Activated naive CD4-positive, alpha-beta T cell treated with anti-CD3 and anti-CD28 coated beads for 36 hours (primary cell): ENCODE measurements at regions of chr3 and their contacts with region 1.

Region 1: DNA sequence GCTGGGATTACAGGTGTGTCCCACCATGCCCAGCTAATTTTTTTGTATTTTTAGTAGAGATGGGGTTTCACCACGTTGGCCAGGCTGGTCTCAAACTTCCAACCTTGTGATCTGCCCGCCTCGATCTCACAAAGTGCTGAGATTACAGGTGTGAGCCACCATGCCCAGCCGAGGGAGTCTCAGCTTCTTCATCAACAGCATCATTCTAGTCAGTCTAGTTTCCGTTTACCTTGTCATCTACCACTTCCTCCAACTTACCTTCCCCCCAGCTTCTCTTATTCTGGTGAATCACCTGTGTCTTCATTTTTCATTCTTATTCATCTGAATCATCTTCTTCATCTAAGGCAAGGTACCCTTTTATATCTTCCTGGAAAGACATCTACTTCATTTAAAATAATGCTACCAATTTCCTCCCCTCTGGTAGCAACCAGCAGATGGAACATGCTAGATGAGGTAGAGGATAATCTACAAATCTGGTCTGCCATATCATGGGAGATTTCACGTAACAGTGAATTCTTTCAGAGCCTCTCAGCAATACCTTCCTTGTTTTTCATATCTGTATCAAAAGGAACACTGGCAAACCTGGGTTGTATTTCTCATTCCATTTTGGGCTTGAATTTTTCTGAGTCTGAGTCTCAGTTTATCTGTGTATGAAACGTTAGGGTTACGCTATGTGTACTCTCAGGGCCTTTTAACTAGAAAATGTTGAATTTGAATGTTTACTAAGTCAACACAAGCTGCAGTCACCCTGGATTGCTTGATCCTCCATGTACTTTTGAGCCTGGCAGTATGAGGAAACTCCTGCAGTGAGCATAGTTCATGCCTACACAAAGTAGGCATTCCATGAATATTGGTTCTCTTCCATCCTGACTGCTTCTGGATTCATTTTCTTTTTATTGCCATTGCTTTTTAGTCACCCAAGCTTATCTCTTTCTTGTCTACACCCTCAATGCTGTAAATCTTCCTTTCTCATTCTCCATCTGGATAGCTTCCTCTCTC is 16.8 kb downstream of the LPP start:
- DNase-seq: peak; percentile 89
- H3K4me3 Mint-ChIP-seq: peak overlapping the region; percentile 39
- H3K27ac Mint-ChIP-seq: peak overlapping the region; percentile 86
- H3K4me1 Mint-ChIP-seq: peaks cover 64% of the 10 kb centered on the region
- H3K27me3 Mint-ChIP-seq: no peaks in the 10 kb centered on the region

Region 2: GRCh38 chr3:187802928-187803259 is 367.9 kb before region 1 on chr3:
- CTCF ChIA-PET with region 1: no interaction called
- intact Hi-C with region 1: loop called (anchors 1 kb)
- DNase-seq: peak; percentile 89
- H3K4me3 Mint-ChIP-seq: peak overlapping the region; percentile 1
- H3K27ac Mint-ChIP-seq: peak overlapping the region; percentile 79
- H3K4me1 Mint-ChIP-seq: peaks cover 95% of the 10 kb centered on the region
- H3K27me3 Mint-ChIP-seq: no peaks in the 10 kb centered on the region

Region 3: DNA sequence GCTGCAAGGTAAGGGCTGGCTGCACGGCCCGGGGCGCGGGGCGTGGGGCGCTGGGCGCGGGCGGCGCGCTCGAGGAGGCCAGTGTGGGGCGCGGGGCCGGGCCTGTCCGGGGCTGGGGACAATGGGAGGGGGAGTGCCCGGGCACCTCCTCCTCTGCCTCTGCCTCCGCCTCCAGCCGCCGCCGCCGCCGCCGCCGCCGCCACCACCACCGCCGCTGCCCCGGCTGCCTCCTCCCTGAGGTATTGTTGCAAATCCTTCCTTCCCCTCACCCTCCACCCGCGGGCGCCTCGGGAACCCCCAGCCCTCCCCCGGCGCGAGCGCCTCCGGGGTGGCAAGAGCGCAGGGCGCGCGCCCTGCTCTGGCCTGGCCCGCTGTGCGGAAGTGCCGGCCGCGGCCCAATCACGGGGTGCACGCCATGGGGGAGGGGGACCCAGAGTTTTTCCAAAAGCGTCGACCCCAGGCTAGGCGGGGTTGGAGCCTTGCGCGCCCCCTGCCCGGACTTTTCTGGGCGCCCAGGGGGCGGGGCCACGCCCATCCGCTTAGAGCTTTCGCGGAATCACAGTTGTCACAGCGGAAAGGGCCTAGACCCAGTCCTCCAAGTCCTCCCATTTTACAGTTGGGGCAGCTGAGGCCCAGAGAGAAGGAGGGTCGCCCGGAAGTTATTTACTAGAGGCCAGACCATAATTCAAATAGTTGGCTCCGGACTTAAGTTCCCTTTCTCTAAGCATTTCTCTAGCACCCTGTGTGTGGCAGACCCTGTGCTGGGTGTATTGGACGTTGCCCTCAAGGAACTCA is 16.5 kb before region 1 on chr3 and contains the start of gene LPP:
- CTCF ChIA-PET with region 1: interaction called, 3 read pairs
- intact Hi-C with region 1: loop called (anchors 1 kb)
- DNase-seq: peak; percentile 88
- H3K4me3 Mint-ChIP-seq: peak within 1 kb of the TSS; percentile 83
- H3K27ac Mint-ChIP-seq: peak within 1 kb of the TSS; percentile 89
- H3K4me1 Mint-ChIP-seq: peaks cover 54% of the 10 kb centered on the region
- H3K27me3 Mint-ChIP-seq: no peaks in the 10 kb centered on the region
- total RNA-seq, gene LPP: 27.5 to 31.8 TPM

Region 4: GRCh38 chr3:188286087-188286513 is 115.3 kb after region 1 on chr3:
- CTCF ChIA-PET with region 1: interaction called, 3 read pairs
- intact Hi-C with region 1: loop called (anchors 1 kb)
- DNase-seq: peak; percentile 32
- H3K4me3 Mint-ChIP-seq: no peak overlapping the region
- H3K27ac Mint-ChIP-seq: no peak overlapping the region
- H3K4me1 Mint-ChIP-seq: peaks cover 45% of the 10 kb centered on the region
- H3K27me3 Mint-ChIP-seq: no peaks in the 10 kb centered on the region

Region 5: GRCh38 chr3:188320757-188321156 is 150.0 kb after region 1 on chr3:
- CTCF ChIA-PET with region 1: no interaction called
- intact Hi-C with region 1: loop called (anchors 1 kb)
- DNase-seq: no peak
- H3K4me3 Mint-ChIP-seq: no peak overlapping the region
- H3K27ac Mint-ChIP-seq: no peak overlapping the region
- H3K4me1 Mint-ChIP-seq: peaks cover 49% of the 10 kb centered on the region
- H3K27me3 Mint-ChIP-seq: no peaks in the 10 kb centered on the region

Region 6: DNA sequence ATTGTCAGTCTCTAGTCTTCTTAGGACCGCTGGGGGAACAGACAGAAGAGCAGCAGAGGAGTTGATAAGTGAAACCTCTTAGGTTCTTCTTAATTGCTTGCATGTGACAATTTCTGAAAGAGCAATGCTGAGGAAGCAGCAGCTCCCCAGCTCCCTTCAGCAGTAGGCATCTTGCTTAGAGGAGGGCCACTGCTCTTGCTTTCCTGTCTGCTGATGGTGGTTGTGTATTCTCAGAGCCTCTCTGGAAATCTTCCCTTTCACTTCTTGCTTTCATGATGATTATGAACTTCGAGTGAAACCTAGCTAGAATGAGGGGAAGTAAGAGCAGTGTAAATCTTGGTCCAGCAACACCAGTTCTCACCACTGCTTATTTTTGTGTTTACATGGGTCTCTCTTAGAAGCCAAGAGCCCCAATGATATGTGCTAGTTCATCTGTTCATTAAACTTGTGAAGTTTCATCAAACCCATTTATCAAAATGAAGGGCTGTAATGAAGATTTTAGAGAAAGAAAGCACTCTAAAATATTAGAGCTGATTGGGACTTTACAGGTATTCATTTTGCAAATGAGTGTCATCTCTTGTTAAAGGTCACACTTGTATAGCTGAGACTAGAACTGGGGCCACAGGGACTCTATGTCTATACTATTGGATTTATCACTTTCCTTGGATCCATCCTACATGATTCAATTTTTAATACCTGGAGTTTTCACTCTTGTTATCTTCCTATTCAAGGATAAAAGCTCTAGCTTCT is 229.9 kb after region 1 on chr3:
- CTCF ChIA-PET with region 1: interaction called, 3 read pairs
- intact Hi-C with region 1: loop called (anchors 1 kb)
- DNase-seq: peak; percentile 60
- H3K4me3 Mint-ChIP-seq: no peak overlapping the region
- H3K27ac Mint-ChIP-seq: peak overlapping the region; percentile 43
- H3K4me1 Mint-ChIP-seq: peaks cover 70% of the 10 kb centered on the region
- H3K27me3 Mint-ChIP-seq: no peaks in the 10 kb centered on the region

Region 7: GRCh38 chr3:189756220-189757078 is 1585.7 kb after region 1 on chr3:
- CTCF ChIA-PET with region 1: no interaction called
- intact Hi-C with region 1: no loop called
- DNase-seq: no peak
- H3K4me3 Mint-ChIP-seq: no peak overlapping the region
- H3K27ac Mint-ChIP-seq: no peak overlapping the region
- H3K4me1 Mint-ChIP-seq: no peaks in the 10 kb centered on the region
- H3K27me3 Mint-ChIP-seq: no peaks in the 10 kb centered on the region